Right lobe of liver (tissue), 6 donors: ENCODE measurements at regions of chr16 and their contacts with region 1.

Region 1: GRCh38 chr16:89167425-89167941 is 4.1 kb upstream of the CDH15 start:
- DNase-seq: peak; percentile 76 to 86 (median 84)
- ATAC-seq: peak; percentile 71 to 79 (median 74)
- H3K4me3 ChIP-seq: no peak overlapping the region
- H3K27ac ChIP-seq: no peak overlapping the region
- H3K4me1 ChIP-seq: peaks cover 0 to 8% (median 0%) of the 10 kb centered on the region in 4 donors
- H3K27me3 ChIP-seq: peaks cover 0 to 9% of the 10 kb centered on the region in 2 donors
- CTCF ChIP-seq: peak; percentile 69 to 89 (median 80)
- POLR2A ChIP-seq: no peak

Region 2: GRCh38 chr16:88811769-88812512 is 355.5 kb before region 1 on chr16 and contains the start of gene APRT:
- intact Hi-C with region 1: loop called in 1 of 2 experiments (anchors 10 kb)
- DNase-seq: peak; percentile 96 to 98 (median 97)
- ATAC-seq: peak; percentile 87 to 94 (median 90)
- H3K4me3 ChIP-seq: peak within 1 kb of the TSS; percentile 74 to 99 (median 85)
- H3K27ac ChIP-seq: peak within 1 kb of the TSS; percentile 45 to 90 (median 75)
- H3K4me1 ChIP-seq: peaks cover 0 to 18% (median 4%) of the 10 kb centered on the region in 4 donors
- H3K27me3 ChIP-seq: no peaks in the 10 kb centered on the region
- CTCF ChIP-seq: peak; percentile 32 to 47 (median 36)
- POLR2A ChIP-seq: peak; percentile 72
- total RNA-seq, gene APRT: 61.4 to 120 (median 74.1) TPM

Region 3: DNA sequence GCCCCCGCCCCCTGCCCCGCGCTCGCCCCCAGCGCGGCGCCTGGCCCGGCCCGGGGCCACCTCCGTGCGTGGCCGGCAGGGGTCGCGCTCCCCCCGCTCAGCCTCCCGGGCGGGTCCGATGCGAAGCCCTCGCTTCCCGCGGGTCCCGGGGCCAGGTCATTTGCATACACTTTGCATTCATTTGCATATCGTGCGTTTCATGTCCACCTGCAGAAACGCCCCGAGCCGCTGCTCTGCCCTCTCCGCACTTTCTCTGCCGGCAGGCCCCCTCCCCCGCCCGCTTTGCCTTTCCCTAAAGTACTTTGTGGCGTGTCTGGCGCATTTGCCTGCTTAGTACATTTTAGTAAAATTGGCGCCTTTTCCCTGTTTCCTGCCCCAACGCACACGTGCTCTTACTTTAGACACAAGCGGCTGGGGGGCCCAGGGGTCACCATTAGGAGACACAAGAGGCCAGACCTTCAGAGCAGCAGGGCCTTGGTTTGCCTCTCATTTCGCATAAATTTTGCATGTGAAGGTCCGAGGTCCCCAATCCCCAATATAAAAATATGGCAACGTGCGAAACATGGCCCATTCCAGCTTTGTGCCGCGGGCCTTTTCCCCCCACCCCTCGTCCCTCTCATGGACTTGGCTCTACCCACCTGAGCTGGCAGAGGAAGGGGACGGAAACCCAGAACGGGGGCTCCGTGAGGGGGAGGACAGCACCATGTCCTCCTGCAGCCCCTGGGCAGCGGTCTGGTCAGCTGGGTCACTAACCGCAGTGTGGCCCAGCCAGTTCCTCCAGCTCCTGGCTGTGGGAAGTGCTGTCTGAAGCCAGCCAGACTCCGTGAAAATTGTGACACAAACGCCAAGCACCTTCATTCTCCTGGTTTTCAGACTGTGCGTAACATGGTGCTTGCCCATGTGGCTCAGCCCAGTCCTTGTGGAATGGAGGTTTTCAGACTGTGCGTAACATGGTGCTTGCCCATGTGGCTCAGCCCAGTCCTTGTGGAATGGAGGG is 225.3 kb before region 1 on chr16:
- intact Hi-C with region 1: loop called in 1 of 2 experiments (anchors 5 kb)
- DNase-seq: peak in 1 of 3 donors; percentile 51
- ATAC-seq: peak; percentile 29 to 66 (median 62)
- H3K4me3 ChIP-seq: peak overlapping the region in 1 of 3 donors; percentile 42
- H3K27ac ChIP-seq: no peak overlapping the region
- H3K4me1 ChIP-seq: no peaks in the 10 kb centered on the region
- H3K27me3 ChIP-seq: peaks cover 0 to 12% of the 10 kb centered on the region in 2 donors
- CTCF ChIP-seq: peak; percentile 45 to 80 (median 52)
- POLR2A ChIP-seq: no peak

Region 4: DNA sequence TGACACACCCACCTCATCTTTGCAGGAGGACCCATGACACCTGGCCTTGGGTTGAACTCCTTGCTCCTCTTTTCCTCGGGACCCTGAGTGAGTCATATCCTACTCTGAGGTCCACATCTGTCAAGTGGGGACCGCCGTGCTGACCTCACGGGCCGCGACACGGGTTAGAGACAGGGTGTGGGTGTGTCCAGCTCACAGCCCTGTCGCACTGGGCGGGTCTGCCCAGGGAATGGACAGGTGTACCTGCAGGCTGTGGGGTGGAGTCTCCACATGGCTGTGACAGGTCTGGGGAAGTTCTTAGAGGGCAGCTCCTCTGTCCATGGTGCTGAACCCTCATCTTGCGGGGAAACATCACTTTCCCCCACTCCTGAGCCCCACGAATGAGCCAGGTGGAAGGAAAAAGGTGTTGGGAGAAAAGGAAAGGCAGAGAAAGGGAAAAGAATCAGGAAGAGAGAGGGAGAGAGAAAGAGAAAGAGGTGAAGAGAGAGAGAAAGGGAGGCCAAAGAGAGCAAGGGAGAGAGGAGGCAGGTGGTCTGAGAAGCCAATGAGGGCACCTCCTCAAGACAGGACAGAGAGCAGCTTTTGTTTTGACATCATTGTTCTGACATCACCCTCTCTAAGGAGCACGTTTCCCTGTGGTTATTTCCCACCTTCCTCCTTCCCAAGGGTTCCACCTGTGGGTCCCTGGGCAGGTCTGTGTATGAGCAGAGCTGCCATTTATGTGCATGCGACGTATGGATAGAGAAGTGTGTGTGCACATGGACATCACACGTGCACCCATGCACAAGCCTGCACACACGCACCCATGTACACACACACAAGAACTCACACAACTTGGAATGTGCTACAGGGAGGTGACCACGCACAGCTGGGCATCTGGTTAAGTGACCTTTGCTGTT is 157.9 kb before region 1 on chr16:
- intact Hi-C with region 1: loop called in 1 of 2 experiments (anchors 10 kb)
- DNase-seq: peak in 1 of 3 donors; percentile 52
- ATAC-seq: peak in 1 of 4 donors; percentile 33
- H3K4me3 ChIP-seq: no peak overlapping the region
- H3K27ac ChIP-seq: no peak overlapping the region
- H3K4me1 ChIP-seq: no peaks in the 10 kb centered on the region
- H3K27me3 ChIP-seq: no peaks in the 10 kb centered on the region
- CTCF ChIP-seq: no peak
- POLR2A ChIP-seq: no peak

Region 5: GRCh38 chr16:89374393-89374960 is 207.0 kb after region 1 on chr16:
- intact Hi-C with region 1: no loop called
- DNase-seq: peak in 1 of 3 donors; percentile 35
- ATAC-seq: no peak
- H3K4me3 ChIP-seq: no peak overlapping the region
- H3K27ac ChIP-seq: no peak overlapping the region
- H3K4me1 ChIP-seq: no peaks in the 10 kb centered on the region
- H3K27me3 ChIP-seq: no peaks in the 10 kb centered on the region
- CTCF ChIP-seq: no peak
- POLR2A ChIP-seq: no peak